CD8-positive, alpha-beta T cell (primary cell): ENCODE measurements at regions of chr2 and their contacts with region 1.

Region 1: GRCh38 chr2:219388127-219388844 is 574 bp upstream of the DNPEP start:
- DNase-seq: peak; percentile 98 to 100 (median 99)
- ATAC-seq: peak; percentile 79
- H3K4me3 ChIP-seq: peak overlapping the region; percentile 39 to 42
- H3K4me3 Mint-ChIP-seq: peak overlapping the region; percentile 92
- H3K27ac ChIP-seq: peak overlapping the region; percentile 40 to 86
- H3K27ac Mint-ChIP-seq: peak overlapping the region; percentile 84
- H3K4me1 ChIP-seq: peaks cover 22% of the 10 kb centered on the region
- H3K4me1 Mint-ChIP-seq: peaks cover 23% of the 10 kb centered on the region
- H3K27me3 ChIP-seq: no peaks in the 10 kb centered on the region
- H3K27me3 Mint-ChIP-seq: no peaks in the 10 kb centered on the region
- CTCF ChIP-seq: peak; percentile 62

Region 2: DNA sequence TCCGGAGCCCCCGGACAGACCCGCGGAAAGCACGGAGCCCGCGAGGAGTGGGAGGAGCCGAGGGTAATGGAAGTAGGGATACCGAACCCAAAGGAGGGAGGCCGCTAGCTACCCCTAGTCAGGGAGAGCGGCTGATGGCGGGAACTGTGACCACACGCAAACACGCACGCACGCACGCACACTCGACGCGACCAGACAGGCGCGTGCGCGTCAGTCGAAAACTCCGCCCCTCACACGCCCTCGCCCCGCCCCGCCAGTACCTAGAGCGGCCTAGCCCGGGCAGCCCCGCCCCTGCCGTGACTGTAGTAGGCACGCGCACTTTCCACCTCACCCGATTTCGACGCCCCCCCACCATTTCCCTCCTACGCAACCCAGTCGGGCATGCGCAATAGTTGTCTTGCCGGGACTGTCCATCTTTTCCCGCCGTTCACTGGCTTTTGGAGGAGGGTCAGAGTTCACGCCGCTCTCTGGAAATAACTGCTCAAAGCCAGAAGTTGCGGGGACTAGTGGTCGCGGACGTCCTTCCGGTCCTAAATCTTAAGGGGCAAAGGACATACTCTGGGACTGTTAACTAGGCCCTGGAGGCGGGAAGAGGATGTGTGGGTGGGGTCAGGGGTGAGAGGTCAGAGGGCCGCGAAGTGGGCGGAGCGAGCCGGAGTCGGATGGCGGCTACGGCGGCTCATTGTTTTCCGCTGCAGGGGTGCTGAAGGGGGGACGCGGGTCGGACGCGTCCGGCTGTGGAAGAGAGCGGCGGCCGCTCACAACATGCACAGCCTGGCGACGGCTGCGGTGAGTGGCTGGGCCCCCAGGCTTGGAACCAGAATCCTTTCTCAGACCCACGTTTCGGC is 819.9 kb before region 1 on chr2 and contains the starts of genes CNOT9 and USP37:
- CTCF ChIA-PET with region 1: no interaction called
- POLR2A ChIA-PET with region 1: no interaction called
- intact Hi-C with region 1: loop called in 1 of 2 experiments (anchors 2 kb)
- DNase-seq: peak; percentile 99 to 100 (median 100)
- ATAC-seq: peak; percentile 90
- H3K4me3 ChIP-seq: peak within 1 kb of the TSS; percentile 84 to 92
- H3K4me3 Mint-ChIP-seq: peak within 1 kb of the TSS; percentile 96
- H3K27ac ChIP-seq: peak within 1 kb of the TSS; percentile 91 to 99
- H3K27ac Mint-ChIP-seq: peak within 1 kb of the TSS; percentile 98
- H3K4me1 ChIP-seq: peaks cover 45% of the 10 kb centered on the region
- H3K4me1 Mint-ChIP-seq: peaks cover 63% of the 10 kb centered on the region
- H3K27me3 ChIP-seq: no peaks in the 10 kb centered on the region
- H3K27me3 Mint-ChIP-seq: no peaks in the 10 kb centered on the region
- CTCF ChIP-seq: no peak
- total RNA-seq, gene CNOT9: 73.9 to 79.3 TPM
- total RNA-seq, gene USP37: 22.8 to 23.2 TPM

Region 3: DNA sequence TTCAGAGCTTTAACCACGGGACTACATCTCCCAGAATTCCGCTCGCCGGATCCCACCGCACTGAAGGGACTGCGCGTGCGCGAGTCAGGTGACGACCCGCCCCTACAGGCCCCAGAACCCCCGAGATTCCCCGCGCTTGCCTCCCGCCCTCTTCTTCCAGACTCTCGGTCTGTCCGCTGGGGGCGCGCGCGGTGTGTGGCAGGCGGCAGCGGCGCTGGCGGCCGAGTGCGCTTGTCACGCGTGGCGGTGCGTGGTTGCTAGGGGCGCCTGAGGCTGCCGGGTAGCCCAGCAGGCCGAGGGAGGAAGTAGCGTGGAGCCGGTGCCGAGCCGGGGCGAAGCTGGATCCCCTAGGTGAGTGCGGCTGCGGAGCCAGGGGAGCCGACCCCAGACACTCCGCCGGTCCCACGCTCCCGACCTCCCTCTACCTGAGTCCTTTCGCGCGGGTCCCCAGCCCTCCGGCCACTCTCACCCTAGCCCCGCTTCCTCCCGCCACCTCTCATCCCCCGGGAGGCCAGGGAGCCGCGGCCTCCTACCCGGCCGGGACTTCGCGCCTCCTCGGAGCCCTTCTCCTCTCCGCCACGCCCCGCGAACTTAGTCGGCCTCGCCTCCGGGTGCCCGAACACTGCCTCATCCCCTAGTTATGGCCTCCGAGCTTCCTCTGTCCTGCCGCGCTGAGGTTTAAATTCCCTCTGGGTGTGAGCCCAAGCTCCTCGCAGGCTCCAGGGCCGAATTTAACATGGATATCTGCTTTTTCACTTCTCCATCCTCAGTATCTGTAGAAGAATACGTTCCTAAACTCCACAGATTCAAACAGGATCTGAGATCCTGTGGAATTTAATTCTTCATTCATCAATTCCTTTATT is 677.4 kb before region 1 on chr2 and contains the start of gene TTLL4:
- CTCF ChIA-PET with region 1: no interaction called
- POLR2A ChIA-PET with region 1: no interaction called
- intact Hi-C with region 1: loop called (anchors 1 to 2 kb)
- DNase-seq: peak; percentile 97 to 99 (median 99)
- ATAC-seq: peak; percentile 99
- H3K4me3 ChIP-seq: peak within 1 kb of the TSS; percentile 86 to 92
- H3K4me3 Mint-ChIP-seq: peak within 1 kb of the TSS; percentile 91
- H3K27ac ChIP-seq: peak within 1 kb of the TSS; percentile 73 to 90
- H3K27ac Mint-ChIP-seq: peak within 1 kb of the TSS; percentile 84
- H3K4me1 ChIP-seq: peaks cover 13% of the 10 kb centered on the region
- H3K4me1 Mint-ChIP-seq: peaks cover 19% of the 10 kb centered on the region
- H3K27me3 ChIP-seq: no peaks in the 10 kb centered on the region
- H3K27me3 Mint-ChIP-seq: peaks cover 6% of the 10 kb centered on the region
- CTCF ChIP-seq: peak; percentile 76
- total RNA-seq, gene TTLL4: 6.9 to 8.1 TPM

Region 4: GRCh38 chr2:219206442-219207253 is 181.6 kb before region 1 on chr2 and contains the start of gene ZFAND2B:
- CTCF ChIA-PET with region 1: no interaction called
- POLR2A ChIA-PET with region 1: interaction called, 6 read pairs
- intact Hi-C with region 1: loop called (anchors 1 to 2 kb)
- DNase-seq: peak; percentile 91 to 99 (median 96)
- ATAC-seq: peak; percentile 88
- H3K4me3 ChIP-seq: peak within 1 kb of the TSS; percentile 63 to 68
- H3K4me3 Mint-ChIP-seq: peak within 1 kb of the TSS; percentile 95
- H3K27ac ChIP-seq: peak within 1 kb of the TSS; percentile 87 to 88
- H3K27ac Mint-ChIP-seq: peak within 1 kb of the TSS; percentile 99
- H3K4me1 ChIP-seq: peaks cover 48% of the 10 kb centered on the region
- H3K4me1 Mint-ChIP-seq: peaks cover 46% of the 10 kb centered on the region
- H3K27me3 ChIP-seq: no peaks in the 10 kb centered on the region
- H3K27me3 Mint-ChIP-seq: no peaks in the 10 kb centered on the region
- CTCF ChIP-seq: no peak
- total RNA-seq, gene ZFAND2B: 74.3 to 78.7 TPM

Region 5: GRCh38 chr2:219278655-219279516 is 109.4 kb before region 1 on chr2 and contains the start of gene DNAJB2:
- CTCF ChIA-PET with region 1: interaction called, 3 read pairs
- POLR2A ChIA-PET with region 1: interaction called, 8 read pairs
- intact Hi-C with region 1: loop called (anchors 1 kb)
- DNase-seq: peak; percentile 97 to 100 (median 99)
- ATAC-seq: peak; percentile 74
- H3K4me3 ChIP-seq: peak within 1 kb of the TSS; percentile 56 to 76
- H3K4me3 Mint-ChIP-seq: peak within 1 kb of the TSS; percentile 90
- H3K27ac ChIP-seq: peak within 1 kb of the TSS; percentile 98 to 99
- H3K27ac Mint-ChIP-seq: peak within 1 kb of the TSS; percentile 99
- H3K4me1 ChIP-seq: peaks cover 31% of the 10 kb centered on the region
- H3K4me1 Mint-ChIP-seq: peaks cover 38% of the 10 kb centered on the region
- H3K27me3 ChIP-seq: no peaks in the 10 kb centered on the region
- H3K27me3 Mint-ChIP-seq: no peaks in the 10 kb centered on the region
- CTCF ChIP-seq: no peak
- total RNA-seq, gene DNAJB2: 108 to 123 TPM

Region 6: GRCh38 chr2:219423652-219424377 is 35.5 kb after region 1 on chr2:
- CTCF ChIA-PET with region 1: no interaction called
- POLR2A ChIA-PET with region 1: no interaction called
- intact Hi-C with region 1: no loop called
- DNase-seq: no peak
- ATAC-seq: no peak
- H3K4me3 ChIP-seq: no peak overlapping the region
- H3K4me3 Mint-ChIP-seq: no peak overlapping the region
- H3K27ac ChIP-seq: no peak overlapping the region
- H3K27ac Mint-ChIP-seq: no peak overlapping the region
- H3K4me1 ChIP-seq: no peaks in the 10 kb centered on the region
- H3K4me1 Mint-ChIP-seq: no peaks in the 10 kb centered on the region
- H3K27me3 ChIP-seq: peaks cover 6 to 8% of the 10 kb centered on the region in 2 experiments
- H3K27me3 Mint-ChIP-seq: peaks cover 40% of the 10 kb centered on the region
- CTCF ChIP-seq: no peak

Region 7: GRCh38 chr2:219498280-219499057 is 110.2 kb after region 1 on chr2 and contains the start of gene GMPPA:
- CTCF ChIA-PET with region 1: interaction called, 4 read pairs
- POLR2A ChIA-PET with region 1: interaction called, 3 read pairs
- intact Hi-C with region 1: loop called (anchors 1 kb)
- DNase-seq: peak; percentile 82 to 95 (median 89)
- ATAC-seq: peak; percentile 90
- H3K4me3 ChIP-seq: peak within 1 kb of the TSS; percentile 75 to 83
- H3K4me3 Mint-ChIP-seq: peak within 1 kb of the TSS; percentile 89
- H3K27ac ChIP-seq: peak within 1 kb of the TSS; percentile 52 to 59
- H3K27ac Mint-ChIP-seq: peak within 1 kb of the TSS; percentile 84
- H3K4me1 ChIP-seq: peaks cover 39% of the 10 kb centered on the region
- H3K4me1 Mint-ChIP-seq: peaks cover 35% of the 10 kb centered on the region
- H3K27me3 ChIP-seq: peaks cover 25 to 34% of the 10 kb centered on the region in 2 experiments
- H3K27me3 Mint-ChIP-seq: peaks cover 33% of the 10 kb centered on the region
- CTCF ChIP-seq: no peak
- total RNA-seq, gene GMPPA: 9.4 to 15.0 TPM

Region 8: DNA sequence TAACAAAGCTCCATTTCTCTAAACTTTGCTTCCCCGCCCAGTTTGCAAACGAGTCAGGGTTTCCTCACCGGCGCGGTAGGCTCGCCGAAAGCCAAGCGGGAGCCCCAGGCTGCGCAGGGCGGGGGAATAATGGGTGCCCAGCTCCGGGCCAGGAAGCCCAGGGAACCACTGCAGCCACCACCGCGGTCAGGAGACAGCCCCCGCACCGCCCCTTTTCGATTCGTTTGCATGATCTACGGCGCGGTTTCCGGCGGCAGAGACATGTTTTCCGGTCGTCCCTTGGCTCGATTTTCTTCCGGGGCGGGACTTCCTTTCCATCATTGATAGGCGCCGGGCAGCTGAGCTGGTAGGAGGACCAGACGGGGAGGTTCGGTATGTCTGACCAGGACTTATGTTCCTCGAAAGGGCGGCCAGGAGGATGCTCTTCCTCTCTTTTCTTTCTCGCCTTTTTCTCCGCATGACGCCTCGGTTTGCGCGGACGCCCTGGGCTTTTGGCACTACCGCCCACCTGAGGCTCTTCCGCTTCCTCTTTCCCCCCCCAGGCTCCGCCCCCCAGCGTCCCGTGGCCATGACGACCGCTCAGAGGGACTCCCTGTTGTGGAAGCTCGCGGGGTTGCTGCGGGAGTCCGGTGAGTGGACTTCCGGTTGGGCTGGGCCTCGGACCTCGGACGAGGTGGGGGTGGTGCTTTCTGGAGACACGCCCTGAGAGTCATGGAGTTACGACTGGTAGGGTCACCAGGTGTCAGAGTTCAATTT is 209.4 kb after region 1 on chr2 and contains the start of gene STK11IP:
- CTCF ChIA-PET with region 1: interaction called, 3 read pairs
- POLR2A ChIA-PET with region 1: interaction called, 3 read pairs
- intact Hi-C with region 1: loop called (anchors 1 to 2 kb)
- DNase-seq: peak; percentile 74 to 95 (median 90)
- ATAC-seq: peak; percentile 84
- H3K4me3 ChIP-seq: peak within 1 kb of the TSS; percentile 79 to 90
- H3K4me3 Mint-ChIP-seq: peak within 1 kb of the TSS; percentile 97
- H3K27ac ChIP-seq: peak within 1 kb of the TSS; percentile 77 to 83
- H3K27ac Mint-ChIP-seq: peak within 1 kb of the TSS; percentile 97
- H3K4me1 ChIP-seq: peaks cover 9% of the 10 kb centered on the region
- H3K4me1 Mint-ChIP-seq: peaks cover 27% of the 10 kb centered on the region
- H3K27me3 ChIP-seq: no peaks in the 10 kb centered on the region
- H3K27me3 Mint-ChIP-seq: no peaks in the 10 kb centered on the region
- CTCF ChIP-seq: no peak
- total RNA-seq, gene STK11IP: 29.7 to 31.5 TPM